Naive thymus-derived CD4-positive, alpha-beta T cell (primary cell): ENCODE measurements at regions of chr4 and their contacts with region 1.

Region 1: DNA sequence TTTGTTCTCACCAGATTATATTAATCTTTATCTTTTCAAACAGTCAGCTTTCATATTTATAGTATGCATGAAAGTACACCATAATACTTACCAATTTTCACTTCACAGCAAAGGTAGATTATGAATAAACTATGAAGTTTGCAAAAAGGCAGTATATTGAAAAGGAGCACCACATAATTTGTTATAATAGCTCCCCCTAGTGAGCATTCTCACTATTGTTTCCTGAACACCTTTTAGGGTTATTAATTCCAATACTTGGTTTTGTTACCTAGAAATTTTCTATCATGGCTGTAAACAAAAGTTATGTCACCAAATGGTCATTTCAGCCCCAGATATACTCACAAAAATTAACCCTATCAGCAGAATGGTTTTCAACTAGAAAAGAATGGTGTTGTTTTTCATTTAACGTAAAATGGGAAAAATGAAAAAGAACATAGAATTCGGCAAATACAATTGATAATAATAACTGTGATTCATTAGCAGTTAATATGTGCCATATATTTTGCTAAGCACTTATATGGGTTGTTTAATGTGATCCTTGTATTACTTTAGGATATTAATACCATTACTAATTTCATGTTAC is 30.2 kb upstream of the NKX6-1 start:
- DNase-seq: peak in 5 of 9 donors; percentile 13 to 37 (median 19)
- ATAC-seq: no peak
- H3K4me3 ChIP-seq: no peak overlapping the region
- H3K4me3 Mint-ChIP-seq: no peak overlapping the region
- H3K27ac ChIP-seq: no peak overlapping the region
- H3K27ac Mint-ChIP-seq: no peak overlapping the region
- H3K4me1 ChIP-seq: no peaks in the 10 kb centered on the region
- H3K4me1 Mint-ChIP-seq: no peaks in the 10 kb centered on the region
- H3K27me3 ChIP-seq: no peaks in the 10 kb centered on the region
- H3K27me3 Mint-ChIP-seq: peaks cover 10 to 44% (median 31%) of the 10 kb centered on the region in 5 donors

Region 2: DNA sequence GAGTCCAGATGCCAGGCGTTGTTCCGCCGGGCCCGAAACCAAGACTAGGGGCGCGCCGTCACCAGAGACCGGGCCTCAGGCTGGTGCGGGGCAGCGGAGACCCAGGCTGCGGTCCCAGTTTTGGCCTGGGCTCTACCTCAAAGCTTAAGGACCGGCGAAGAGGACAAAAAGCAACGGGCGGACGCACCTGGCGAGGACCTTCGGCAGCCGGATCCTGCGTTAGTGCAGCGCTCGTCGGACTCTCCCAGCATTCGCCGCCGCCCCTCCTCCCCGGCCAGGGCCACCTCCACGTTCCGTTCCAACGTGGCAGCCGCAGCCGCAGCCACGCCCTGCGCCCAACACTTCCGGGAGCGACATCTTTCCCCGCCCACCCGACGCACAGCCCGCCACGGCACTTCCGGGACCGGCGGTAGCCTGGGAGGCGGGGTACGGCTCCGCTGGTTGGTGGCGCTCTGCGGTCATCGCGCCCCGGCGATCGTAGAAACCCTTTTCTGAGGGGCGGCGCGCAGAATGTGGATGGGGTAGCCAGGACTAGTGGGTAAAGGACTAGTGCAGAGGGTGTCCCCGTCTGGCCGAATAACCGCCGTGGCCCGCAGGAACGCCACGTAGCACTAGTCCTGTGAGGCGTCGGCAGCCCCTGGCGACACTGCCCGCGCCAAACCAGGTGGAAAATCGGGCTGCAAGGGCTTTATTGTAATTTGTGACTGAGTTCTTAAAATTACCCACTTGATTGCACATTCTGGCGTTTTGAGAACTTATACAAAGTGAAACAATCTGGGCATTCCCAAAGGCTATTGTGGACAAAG is 1638.2 kb before region 1 on chr4 and contains the start of gene SEC31A:
- CTCF ChIA-PET with region 1: no interaction called
- POLR2A ChIA-PET with region 1: no interaction called
- intact Hi-C with region 1: no loop called
- DNase-seq: peak; percentile 89 to 98 (median 95)
- ATAC-seq: peak; percentile 97
- H3K4me3 ChIP-seq: peak within 1 kb of the TSS; percentile 96
- H3K4me3 Mint-ChIP-seq: peak within 1 kb of the TSS; percentile 86 to 96 (median 93)
- H3K27ac ChIP-seq: peak within 1 kb of the TSS; percentile 99
- H3K27ac Mint-ChIP-seq: peak within 1 kb of the TSS; percentile 92 to 99 (median 97)
- H3K4me1 ChIP-seq: peaks cover 11 to 12% of the 10 kb centered on the region in 2 donors
- H3K4me1 Mint-ChIP-seq: peaks cover 18 to 51% (median 41%) of the 10 kb centered on the region in 7 donors
- H3K27me3 ChIP-seq: no peaks in the 10 kb centered on the region
- H3K27me3 Mint-ChIP-seq: no peaks in the 10 kb centered on the region
- total RNA-seq, gene SEC31A: 137 to 168 (median 149) TPM

Region 3: DNA sequence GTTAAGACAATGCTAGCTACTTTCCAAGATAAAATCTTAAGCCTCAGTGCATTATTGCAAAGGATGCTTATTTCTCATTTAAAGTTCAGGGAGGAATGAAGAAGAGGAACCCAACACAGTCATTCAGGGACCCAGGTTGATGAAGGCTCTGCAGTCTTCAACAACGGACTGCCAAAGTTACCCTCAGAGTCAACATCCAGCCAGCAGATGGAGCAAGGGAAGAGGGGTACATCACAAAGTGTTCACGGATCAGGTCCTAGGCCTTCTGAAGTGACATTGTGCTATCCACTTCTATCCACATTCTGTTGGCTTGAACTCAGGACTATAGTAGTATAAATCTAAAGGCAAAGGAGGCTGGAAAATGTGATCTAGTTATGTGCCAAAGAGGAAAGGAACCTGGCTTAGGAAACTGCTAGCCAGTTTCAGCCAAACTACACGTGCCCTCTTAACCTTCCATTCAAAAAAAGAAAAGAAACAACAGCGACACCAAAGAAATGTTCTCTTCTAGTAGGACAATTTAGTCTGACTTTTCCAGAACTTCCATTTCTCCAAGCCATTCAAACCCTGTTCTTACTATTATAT is 59.0 kb before region 1 on chr4:
- CTCF ChIA-PET with region 1: no interaction called
- POLR2A ChIA-PET with region 1: no interaction called
- intact Hi-C with region 1: loop called in 1 of 2 experiments (anchors 1 kb)
- DNase-seq: no peak
- ATAC-seq: no peak
- H3K4me3 ChIP-seq: no peak overlapping the region
- H3K4me3 Mint-ChIP-seq: no peak overlapping the region
- H3K27ac ChIP-seq: no peak overlapping the region
- H3K27ac Mint-ChIP-seq: no peak overlapping the region
- H3K4me1 ChIP-seq: no peaks in the 10 kb centered on the region
- H3K4me1 Mint-ChIP-seq: peaks cover 0 to 1% (median 0%) of the 10 kb centered on the region in 7 donors
- H3K27me3 ChIP-seq: peaks cover 0 to 3% of the 10 kb centered on the region in 2 donors
- H3K27me3 Mint-ChIP-seq: peaks cover 6 to 41% (median 25%) of the 10 kb centered on the region in 5 donors